Esophagus muscularis mucosa (tissue), 4 donors: ENCODE measurements at regions of chr2 and their contacts with region 1.

Region 1: GRCh38 chr2:39696838-39697237 is 31.1 kb downstream of the TMEM178A start:
- DNase-seq: no peak
- H3K4me3 ChIP-seq: no peak overlapping the region
- H3K27ac ChIP-seq: peak overlapping the region; percentile 49 to 70 (median 63)
- H3K4me1 ChIP-seq: peaks cover 15 to 30% (median 27%) of the 10 kb centered on the region in 4 donors
- H3K27me3 ChIP-seq: no peaks in the 10 kb centered on the region
- CTCF ChIP-seq: peak; percentile 38 to 49 (median 45)
- EP300 ChIP-seq: no peak
- POLR2A ChIP-seq: no peak

Region 2: GRCh38 chr2:38610851-38611801 is 1085.7 kb before region 1 on chr2:
- intact Hi-C with region 1: no loop called
- DNase-seq: no peak
- H3K4me3 ChIP-seq: no peak overlapping the region
- H3K27ac ChIP-seq: no peak overlapping the region
- H3K4me1 ChIP-seq: no peaks in the 10 kb centered on the region
- H3K27me3 ChIP-seq: no peaks in the 10 kb centered on the region
- CTCF ChIP-seq: no peak
- EP300 ChIP-seq: no peak
- POLR2A ChIP-seq: no peak

Region 3: DNA sequence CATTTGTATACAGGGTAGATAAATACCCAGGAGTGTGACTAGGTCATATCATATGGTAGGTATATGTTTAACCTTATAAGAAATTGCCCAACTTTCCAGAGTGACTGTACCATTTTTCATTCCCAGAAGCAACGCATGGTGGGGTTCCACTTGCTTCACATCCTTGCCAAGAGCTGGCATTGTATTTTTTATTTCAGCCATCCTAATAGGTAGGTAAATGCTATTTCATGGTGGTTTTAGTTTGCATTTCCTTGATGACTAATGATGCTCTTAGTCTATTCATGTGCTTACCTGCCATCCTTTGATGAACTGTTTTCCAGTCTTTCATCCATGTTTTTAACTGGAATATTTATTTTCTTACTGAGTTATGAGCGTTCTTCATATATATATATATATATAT is 311.7 kb before region 1 on chr2:
- intact Hi-C with region 1: loop called (anchors 5 kb)
- DNase-seq: no peak
- H3K4me3 ChIP-seq: no peak overlapping the region
- H3K27ac ChIP-seq: no peak overlapping the region
- H3K4me1 ChIP-seq: peaks cover 49 to 64% (median 61%) of the 10 kb centered on the region in 4 donors
- H3K27me3 ChIP-seq: no peaks in the 10 kb centered on the region
- CTCF ChIP-seq: no peak
- EP300 ChIP-seq: no peak
- POLR2A ChIP-seq: no peak

Region 4: GRCh38 chr2:39513641-39514094 is 183.2 kb before region 1 on chr2:
- intact Hi-C with region 1: loop called (anchors 5 kb)
- DNase-seq: no peak
- H3K4me3 ChIP-seq: no peak overlapping the region
- H3K27ac ChIP-seq: peak overlapping the region; percentile 70 to 74 (median 74)
- H3K4me1 ChIP-seq: peaks cover 62 to 91% (median 89%) of the 10 kb centered on the region in 4 donors
- H3K27me3 ChIP-seq: no peaks in the 10 kb centered on the region
- CTCF ChIP-seq: peak; percentile 42 to 61 (median 45)
- EP300 ChIP-seq: no peak
- POLR2A ChIP-seq: no peak

Region 5: GRCh38 chr2:39595116-39595515 is 101.7 kb before region 1 on chr2:
- intact Hi-C with region 1: loop called (anchors 5 kb)
- DNase-seq: no peak
- H3K4me3 ChIP-seq: no peak overlapping the region
- H3K27ac ChIP-seq: no peak overlapping the region
- H3K4me1 ChIP-seq: peaks cover 0 to 9% (median 7%) of the 10 kb centered on the region in 4 donors
- H3K27me3 ChIP-seq: no peaks in the 10 kb centered on the region
- CTCF ChIP-seq: no peak
- EP300 ChIP-seq: no peak
- POLR2A ChIP-seq: no peak

Region 6: DNA sequence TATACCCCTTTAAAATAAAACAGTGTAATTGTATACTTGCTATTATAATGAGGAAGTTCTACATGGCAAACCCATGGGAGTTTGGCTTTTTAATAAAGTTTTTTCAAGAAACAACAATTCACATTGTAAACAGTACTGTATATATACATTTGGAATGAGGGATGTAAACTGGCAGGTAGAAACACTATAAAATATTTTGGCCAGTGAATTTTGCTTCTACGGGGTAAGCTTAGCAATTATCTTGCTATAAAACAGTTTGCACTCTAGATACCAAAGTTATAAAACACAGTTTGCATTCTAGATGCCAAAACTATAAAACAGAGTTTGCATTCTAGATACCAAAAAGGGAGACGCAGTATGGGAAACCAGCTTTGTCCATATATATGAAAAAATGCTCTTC is 65.6 kb after region 1 on chr2:
- intact Hi-C with region 1: no loop called
- DNase-seq: no peak
- H3K4me3 ChIP-seq: no peak overlapping the region
- H3K27ac ChIP-seq: no peak overlapping the region
- H3K4me1 ChIP-seq: no peaks in the 10 kb centered on the region
- H3K27me3 ChIP-seq: no peaks in the 10 kb centered on the region
- CTCF ChIP-seq: no peak
- EP300 ChIP-seq: no peak
- POLR2A ChIP-seq: no peak